ENCODE measurements at regions of chr12 and their contacts with region 1.

Region 1: GRCh38 chr12:132710422-132711168 is at the start of gene PGAM5:
- DNase-seq: peak; percentile 70
- ATAC-seq: peak; percentile 93
- H3K4me3 ChIP-seq: peak within 1 kb of the TSS; percentile 92
- H3K27ac ChIP-seq: peak within 1 kb of the TSS; percentile 81
- H3K4me1 ChIP-seq: 0 out of 2 replicates have a peak, but pooled peaks cover 2% of the 10 kb centered on the region
- H3K27me3 ChIP-seq: no peaks in the 10 kb centered on the region
- CTCF ChIP-seq: no peak
- POLR2A ChIP-seq: 0 out of 2 replicates have a peak, but pooled peaks have one; percentile 52
- RAD21 ChIP-seq: no peak
- total RNA-seq, gene PGAM5: 36.9 and 37.8 TPM in 2 replicates

Region 2: GRCh38 chr12:132824053-132824452 is 113.5 kb after region 1 on chr12:
- CTCF ChIA-PET with region 1: no interaction called
- POLR2A ChIA-PET with region 1: interaction called, 10 read pairs
- dilution Hi-C with region 1: no loop called
- in situ Hi-C with region 1: no loop called
- intact Hi-C with region 1: no loop called
- DNase-seq: peak; percentile 16
- ATAC-seq: no peak
- H3K4me3 ChIP-seq: no peak overlapping the region
- H3K27ac ChIP-seq: no peak overlapping the region
- H3K4me1 ChIP-seq: peaks cover 2% of the 10 kb centered on the region; the same call in 1 of the 2 replicates
- H3K27me3 ChIP-seq: no peaks in the 10 kb centered on the region
- CTCF ChIP-seq: no peak
- POLR2A ChIP-seq: no peak
- RAD21 ChIP-seq: no peak

Region 3: GRCh38 chr12:132948146-132949066 is 237.8 kb after region 1 on chr12:
- CTCF ChIA-PET with region 1: no interaction called
- POLR2A ChIA-PET with region 1: no interaction called
- dilution Hi-C with region 1: no loop called
- in situ Hi-C with region 1: no loop called
- intact Hi-C with region 1: no loop called
- DNase-seq: no peak
- ATAC-seq: no peak
- H3K4me3 ChIP-seq: no peak overlapping the region
- H3K27ac ChIP-seq: no peak overlapping the region
- H3K4me1 ChIP-seq: no peaks in the 10 kb centered on the region
- H3K27me3 ChIP-seq: no peaks in the 10 kb centered on the region
- CTCF ChIP-seq: no peak
- POLR2A ChIP-seq: no peak
- RAD21 ChIP-seq: no peak

Measured in IMR-90 (cell line).